ENCODE measurements at regions of chr4 and their contacts with region 1.

Region 1: DNA sequence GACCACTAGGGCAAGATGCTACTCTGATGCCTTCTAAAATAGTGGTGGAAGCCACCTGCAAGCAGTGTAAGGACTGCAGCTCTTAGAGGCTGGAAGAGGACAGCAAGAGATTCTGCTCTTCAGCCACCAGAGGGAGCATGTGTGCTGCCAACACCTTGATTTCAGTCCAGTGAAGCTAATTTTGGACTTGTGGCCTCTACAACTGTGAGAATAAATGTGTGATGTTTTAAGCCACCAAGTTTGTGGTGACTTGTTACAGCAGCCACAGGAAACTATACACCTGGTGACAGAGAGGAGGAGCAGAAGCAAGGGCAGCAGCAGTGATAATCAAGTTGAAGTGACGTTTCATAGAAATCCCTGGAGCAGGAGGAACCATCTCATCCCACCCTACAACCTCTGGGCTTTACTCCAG is 55.9 kb downstream of the FGFBP1 start:
- DNase-seq: peak; percentile 57
- H3K4me3 ChIP-seq: no peak overlapping the region; a peak in 1 of 4 replicates
- H3K27ac ChIP-seq: no peak overlapping the region
- H3K4me1 ChIP-seq: peaks cover 0 to 3% of the 10 kb centered on the region in 2 experiments; a peak in 3 of 4 replicates
- H3K27me3 ChIP-seq: no peaks in the 10 kb centered on the region
- CTCF ChIP-seq: peak; percentile 96
- EP300 ChIP-seq: no peak
- RAD21 ChIP-seq: peak; percentile 89

Region 2: DNA sequence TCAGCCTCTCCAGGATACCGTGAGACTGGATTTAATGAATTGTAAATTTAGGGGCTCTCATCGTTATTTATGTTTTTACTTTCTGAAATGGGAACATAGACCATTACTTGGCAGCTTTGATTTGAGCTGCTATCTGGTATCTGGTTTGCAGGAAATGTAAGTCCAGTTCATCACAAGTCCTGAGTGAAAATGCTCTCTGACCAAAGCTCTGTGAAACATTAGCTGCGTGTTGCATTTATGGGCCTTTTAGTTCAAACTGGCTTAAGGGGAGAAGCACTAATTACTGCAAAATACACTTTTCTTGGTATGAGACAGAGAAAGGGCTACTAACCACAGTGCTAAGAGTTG is 412.6 kb before region 1 on chr4:
- CTCF ChIA-PET with region 1: no interaction called
- POLR2A ChIA-PET with region 1: no interaction called
- DNase-seq: no peak
- H3K4me3 ChIP-seq: peak overlapping the region; percentile 61 to 82
- H3K27ac ChIP-seq: peak overlapping the region; percentile 63 to 76
- H3K4me1 ChIP-seq: peaks cover 0 to 4% of the 10 kb centered on the region in 2 experiments; a peak in 1 of 4 replicates
- H3K27me3 ChIP-seq: no peaks in the 10 kb centered on the region
- CTCF ChIP-seq: no peak
- EP300 ChIP-seq: no peak
- RAD21 ChIP-seq: no peak

Region 3: GRCh38 chr4:15729910-15730533 is 152.7 kb before region 1 on chr4:
- CTCF ChIA-PET with region 1: interaction called, 11 read pairs
- POLR2A ChIA-PET with region 1: no interaction called
- DNase-seq: peak; percentile 66
- H3K4me3 ChIP-seq: no peak overlapping the region
- H3K27ac ChIP-seq: no peak overlapping the region
- H3K4me1 ChIP-seq: no peaks in the 10 kb centered on the region
- H3K27me3 ChIP-seq: no peaks in the 10 kb centered on the region
- CTCF ChIP-seq: peak; percentile 84
- EP300 ChIP-seq: no peak
- RAD21 ChIP-seq: peak; percentile 84

Region 4: GRCh38 chr4:15855804-15856475 is 26.7 kb before region 1 on chr4:
- CTCF ChIA-PET with region 1: interaction called, 30 read pairs
- POLR2A ChIA-PET with region 1: no interaction called
- DNase-seq: no peak
- H3K4me3 ChIP-seq: no peak overlapping the region
- H3K27ac ChIP-seq: no peak overlapping the region
- H3K4me1 ChIP-seq: peaks cover 0 to 3% of the 10 kb centered on the region in 2 experiments; a peak in 2 of 4 replicates
- H3K27me3 ChIP-seq: no peaks in the 10 kb centered on the region; the same call in 1 of the 2 replicates
- CTCF ChIP-seq: no peak
- EP300 ChIP-seq: no peak
- RAD21 ChIP-seq: no peak

Region 5: GRCh38 chr4:15906024-15906443 is 23.4 kb after region 1 on chr4:
- CTCF ChIA-PET with region 1: interaction called, 21 read pairs
- POLR2A ChIA-PET with region 1: no interaction called
- DNase-seq: no peak
- H3K4me3 ChIP-seq: no peak overlapping the region
- H3K27ac ChIP-seq: no peak overlapping the region
- H3K4me1 ChIP-seq: peaks cover 0 to 10% of the 10 kb centered on the region in 2 experiments; a peak in 2 of 4 replicates
- H3K27me3 ChIP-seq: no peaks in the 10 kb centered on the region
- CTCF ChIP-seq: no peak
- EP300 ChIP-seq: no peak
- RAD21 ChIP-seq: no peak

Region 6: DNA sequence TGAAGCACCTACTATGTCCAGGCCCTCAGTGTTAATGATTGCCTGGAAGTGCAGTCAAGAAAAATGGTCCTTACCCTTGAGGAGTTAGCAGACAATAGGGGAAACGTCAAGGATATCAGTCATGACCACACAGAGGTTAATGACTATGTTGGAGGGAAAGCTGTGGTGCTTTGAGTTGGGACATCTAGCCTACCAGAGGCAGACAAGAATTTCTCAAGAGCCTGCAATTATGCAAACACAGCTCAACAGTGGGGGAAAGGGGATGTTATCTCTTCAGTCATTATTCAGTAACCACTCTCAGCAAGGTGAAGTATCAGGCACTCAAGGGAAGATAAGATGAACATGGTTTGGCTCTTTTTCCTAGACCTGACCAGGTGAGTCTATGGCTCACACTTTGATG is 62.8 kb after region 1 on chr4:
- CTCF ChIA-PET with region 1: interaction called, 18 read pairs
- POLR2A ChIA-PET with region 1: no interaction called
- DNase-seq: no peak
- H3K4me3 ChIP-seq: no peak overlapping the region
- H3K27ac ChIP-seq: no peak overlapping the region
- H3K4me1 ChIP-seq: no peaks in the 10 kb centered on the region
- H3K27me3 ChIP-seq: no peaks in the 10 kb centered on the region
- CTCF ChIP-seq: no peak
- EP300 ChIP-seq: no peak
- RAD21 ChIP-seq: no peak

Region 7: DNA sequence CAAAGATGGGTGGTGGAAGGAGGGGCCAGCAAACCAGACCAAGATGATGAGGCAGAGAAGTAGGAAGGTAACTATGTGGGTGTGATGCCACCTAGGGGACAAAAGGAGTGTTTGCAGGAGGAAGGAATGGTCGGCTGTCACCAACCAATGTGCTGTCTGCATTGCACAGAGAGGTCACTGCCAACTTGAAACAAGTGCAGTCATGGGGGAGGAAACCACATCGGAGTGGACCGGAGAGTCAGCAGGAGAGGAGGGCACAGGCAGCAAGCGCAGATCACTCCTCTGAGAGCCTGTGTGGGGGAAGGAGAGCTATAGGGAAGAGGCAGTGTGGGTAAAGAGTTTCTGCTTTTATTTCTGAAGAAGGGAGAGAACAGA is 118.8 kb after region 1 on chr4:
- CTCF ChIA-PET with region 1: interaction called, 68 read pairs
- POLR2A ChIA-PET with region 1: no interaction called
- DNase-seq: peak; percentile 76
- H3K4me3 ChIP-seq: no peak overlapping the region; a peak in 1 of 4 replicates
- H3K27ac ChIP-seq: no peak overlapping the region
- H3K4me1 ChIP-seq: peaks cover 0 to 12% of the 10 kb centered on the region in 2 experiments; a peak in 1 of 4 replicates
- H3K27me3 ChIP-seq: 0 out of 2 replicates have a peak, but pooled peaks cover 6% of the 10 kb centered on the region
- CTCF ChIP-seq: peak; percentile 88
- EP300 ChIP-seq: no peak; a peak in 1 of 4 replicates
- RAD21 ChIP-seq: peak; percentile 94

Region 8: DNA sequence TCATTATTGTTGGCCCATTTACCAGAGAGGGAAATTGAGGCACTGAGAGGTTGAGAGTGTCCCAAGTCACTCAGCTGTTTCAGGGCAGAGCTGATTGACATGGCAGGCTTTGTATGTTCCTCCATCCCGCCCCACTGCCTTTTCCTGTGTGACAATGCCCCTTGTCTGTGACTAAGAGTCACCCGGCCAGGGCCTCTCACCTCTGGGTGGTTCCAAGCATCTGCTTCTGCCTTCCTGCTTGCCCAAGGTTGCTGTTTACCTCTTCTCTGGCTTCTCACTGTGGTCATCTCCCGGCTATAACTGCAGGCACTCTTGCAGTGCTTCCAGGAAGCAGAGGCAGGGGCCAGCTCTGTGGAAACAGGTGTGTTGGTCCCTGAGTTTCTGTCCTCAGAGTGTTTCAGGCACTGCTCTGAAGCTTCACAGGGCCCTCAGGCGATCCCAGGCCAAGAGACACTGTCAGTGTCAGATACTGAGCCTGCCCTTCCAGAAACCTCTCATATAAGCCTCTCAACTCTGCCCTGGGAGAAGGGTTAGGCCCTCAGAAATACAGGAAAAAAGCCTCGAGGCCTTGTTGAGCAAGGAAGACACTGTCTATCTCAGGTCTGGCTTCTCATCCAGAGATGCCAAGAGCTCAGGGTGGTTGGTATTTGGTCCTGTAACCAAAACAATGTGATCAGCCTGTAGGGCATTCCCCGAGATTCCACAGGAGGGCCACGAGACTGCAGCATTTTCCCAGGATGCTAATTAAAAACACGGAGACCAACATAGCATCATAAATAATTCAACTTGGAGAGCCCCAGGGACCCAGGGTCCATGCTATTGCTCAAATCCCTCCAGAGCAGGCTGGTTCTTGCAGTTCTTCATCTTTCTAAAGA is 243.1 kb after region 1 on chr4:
- CTCF ChIA-PET with region 1: no interaction called
- POLR2A ChIA-PET with region 1: no interaction called
- DNase-seq: no peak
- H3K4me3 ChIP-seq: no peak overlapping the region
- H3K27ac ChIP-seq: no peak overlapping the region
- H3K4me1 ChIP-seq: peaks cover 0 to 8% of the 10 kb centered on the region in 2 experiments; a peak in 2 of 4 replicates
- H3K27me3 ChIP-seq: no peaks in the 10 kb centered on the region; the same call in 1 of the 2 replicates
- CTCF ChIP-seq: no peak
- EP300 ChIP-seq: no peak
- RAD21 ChIP-seq: no peak